ENCODE measurements at regions of chr7 and their contacts with region 1.

Region 1: GRCh38 chr7:125828153-125828700 is 898.6 kb upstream of the POT1 start:
- DNase-seq: no peak
- ATAC-seq: no peak
- H3K4me3 ChIP-seq: no peak overlapping the region
- H3K27ac ChIP-seq: no peak overlapping the region
- H3K4me1 ChIP-seq: no peaks in the 10 kb centered on the region
- H3K27me3 ChIP-seq: no peaks in the 10 kb centered on the region
- CTCF ChIP-seq: no peak

Region 2: DNA sequence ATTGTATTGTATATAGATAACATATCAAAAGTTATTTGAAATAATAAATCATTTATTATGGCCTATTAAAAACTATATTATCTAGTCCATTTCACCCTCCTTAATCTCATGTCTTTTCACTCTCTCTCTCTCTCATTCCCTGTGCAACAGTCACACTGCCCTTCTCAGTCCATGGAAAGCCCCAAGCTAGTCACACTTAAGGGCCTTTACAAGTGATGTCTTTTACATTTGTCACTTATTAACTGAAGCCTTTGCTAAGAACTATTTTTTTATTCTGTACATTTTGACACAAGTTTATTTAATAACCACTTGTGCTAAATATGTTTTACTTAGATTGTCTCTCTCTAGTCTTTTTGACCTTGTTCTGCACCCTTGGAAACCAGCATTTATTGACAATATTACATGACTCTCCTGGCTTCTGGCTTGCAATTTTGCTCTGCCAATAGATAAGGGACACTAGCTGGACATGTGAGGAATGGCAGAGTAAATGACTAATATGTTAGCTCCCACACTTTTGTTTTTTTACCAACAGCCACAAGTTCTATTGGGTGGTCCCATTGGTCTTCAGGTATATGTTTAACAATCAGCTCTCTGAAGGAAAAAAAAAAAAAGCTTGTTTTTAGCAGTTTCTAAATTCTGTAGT is 191.8 kb before region 1 on chr7:
- intact Hi-C with region 1: no loop called
- DNase-seq: no peak
- ATAC-seq: no peak
- H3K4me3 ChIP-seq: no peak overlapping the region
- H3K27ac ChIP-seq: no peak overlapping the region
- H3K4me1 ChIP-seq: no peaks in the 10 kb centered on the region
- H3K27me3 ChIP-seq: no peaks in the 10 kb centered on the region
- CTCF ChIP-seq: no peak

Region 3: DNA sequence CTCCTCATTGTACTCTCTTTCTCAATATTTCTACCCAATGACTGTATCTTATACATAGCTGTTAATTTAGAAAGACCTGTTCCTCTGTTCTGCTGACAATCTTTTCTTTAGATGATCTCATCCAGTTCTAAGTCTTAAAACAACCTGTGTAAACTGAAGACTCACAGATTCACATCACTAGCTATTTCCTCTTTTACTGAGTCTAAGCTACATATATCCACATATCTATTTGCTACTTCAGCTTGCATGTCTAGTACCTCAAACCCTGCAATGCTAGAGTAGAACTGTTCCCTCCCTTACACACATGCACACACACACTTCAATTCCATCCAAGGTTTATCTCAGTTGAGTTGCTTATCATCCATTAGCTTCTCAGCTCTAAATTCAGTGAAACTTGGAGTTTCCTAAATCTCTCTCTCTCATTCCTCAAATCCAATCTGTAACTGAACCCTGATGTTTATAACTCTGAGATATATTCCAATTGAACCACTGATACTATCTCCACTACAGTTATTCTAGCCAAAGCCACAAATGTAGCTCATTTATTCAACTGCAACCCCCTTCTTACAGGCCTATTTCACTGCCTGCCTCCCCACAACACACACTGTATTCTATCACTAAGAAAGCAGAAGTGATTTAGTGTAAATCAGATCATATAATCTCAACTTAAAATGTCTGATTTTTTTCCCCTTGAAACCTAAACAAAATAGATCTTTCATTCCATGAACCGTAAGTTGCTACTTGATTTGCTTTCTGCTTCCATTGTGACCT is 138.2 kb after region 1 on chr7:
- intact Hi-C with region 1: loop called in 1 of 10 experiments (anchors 5 kb)
- DNase-seq: no peak
- ATAC-seq: no peak
- H3K4me3 ChIP-seq: no peak overlapping the region
- H3K27ac ChIP-seq: no peak overlapping the region
- H3K4me1 ChIP-seq: no peaks in the 10 kb centered on the region
- H3K27me3 ChIP-seq: no peaks in the 10 kb centered on the region
- CTCF ChIP-seq: no peak

Region 4: DNA sequence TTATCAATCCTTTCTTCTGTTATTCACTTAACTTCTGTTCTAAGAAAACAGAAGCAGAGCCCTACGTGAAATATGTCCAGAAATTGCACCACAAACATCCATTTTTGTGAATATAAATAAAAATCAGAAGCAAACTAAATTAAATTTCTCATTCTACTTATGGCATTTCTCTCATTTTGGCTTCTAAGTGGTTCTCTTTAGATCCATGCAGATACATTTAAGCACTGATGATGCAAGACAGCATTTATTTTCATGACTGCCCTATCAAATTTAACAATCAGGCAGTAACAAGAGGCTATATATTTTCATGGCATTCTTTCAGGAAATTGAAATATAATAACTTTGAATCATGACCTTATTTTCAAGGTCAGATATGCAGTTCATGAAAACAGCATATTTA is 375.0 kb after region 1 on chr7:
- intact Hi-C with region 1: no loop called
- DNase-seq: no peak
- ATAC-seq: no peak
- H3K4me3 ChIP-seq: no peak overlapping the region
- H3K27ac ChIP-seq: no peak overlapping the region
- H3K4me1 ChIP-seq: peaks cover 0 to 4% (median 0%) of the 10 kb centered on the region in 9 donors
- H3K27me3 ChIP-seq: no peaks in the 10 kb centered on the region
- CTCF ChIP-seq: no peak